Ascending aorta (tissue), 2 donors: ENCODE measurements at regions of chrX and their contacts with region 1.

Region 1: GRCh38 chrX:34053931-34054330 is 78.2 kb downstream of the FAM47A start:
- DNase-seq: no peak
- H3K4me3 ChIP-seq: no peak overlapping the region
- H3K27ac ChIP-seq: no peak overlapping the region
- H3K4me1 ChIP-seq: no peaks in the 10 kb centered on the region
- H3K27me3 ChIP-seq: no peaks in the 10 kb centered on the region
- CTCF ChIP-seq: no peak

Region 2: DNA sequence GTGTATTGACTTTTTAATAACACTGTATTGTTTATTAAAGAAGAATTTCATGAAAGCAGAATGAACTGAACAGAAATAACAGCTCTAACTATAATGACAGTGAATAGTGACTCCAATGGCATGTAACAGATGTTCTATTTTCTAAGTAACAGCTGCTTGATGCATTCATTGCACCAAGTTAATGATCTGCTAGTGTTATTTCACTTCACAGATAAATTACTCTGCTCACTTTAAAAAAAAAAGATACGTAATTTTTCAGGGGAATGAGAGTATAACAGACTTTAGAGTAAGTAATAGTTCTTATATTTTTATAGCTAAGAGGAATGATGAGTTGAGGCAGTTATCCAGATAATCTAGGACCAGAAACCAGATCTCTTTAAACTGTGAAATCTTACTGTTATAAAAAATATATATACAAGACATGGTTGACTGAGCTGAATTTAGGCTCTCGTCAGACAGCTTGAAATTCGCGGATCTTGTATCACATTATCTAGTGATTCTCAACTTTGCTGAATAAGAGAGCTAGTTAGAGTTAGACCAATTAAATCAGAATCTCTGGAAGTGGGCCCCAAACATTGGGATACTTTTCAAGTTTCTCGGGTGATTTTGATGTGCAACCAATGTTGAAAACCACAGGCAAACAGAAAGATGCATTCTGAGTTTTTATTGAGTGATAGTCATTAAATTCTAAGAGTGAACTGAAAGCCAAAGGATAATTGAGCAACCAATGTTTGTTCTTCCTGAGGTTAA is 1683.3 kb before region 1 on chrX:
- intact Hi-C with region 1: no loop called
- DNase-seq: no peak
- H3K4me3 ChIP-seq: no peak overlapping the region
- H3K27ac ChIP-seq: no peak overlapping the region
- H3K4me1 ChIP-seq: no peaks in the 10 kb centered on the region
- H3K27me3 ChIP-seq: no peaks in the 10 kb centered on the region
- CTCF ChIP-seq: no peak

Region 3: DNA sequence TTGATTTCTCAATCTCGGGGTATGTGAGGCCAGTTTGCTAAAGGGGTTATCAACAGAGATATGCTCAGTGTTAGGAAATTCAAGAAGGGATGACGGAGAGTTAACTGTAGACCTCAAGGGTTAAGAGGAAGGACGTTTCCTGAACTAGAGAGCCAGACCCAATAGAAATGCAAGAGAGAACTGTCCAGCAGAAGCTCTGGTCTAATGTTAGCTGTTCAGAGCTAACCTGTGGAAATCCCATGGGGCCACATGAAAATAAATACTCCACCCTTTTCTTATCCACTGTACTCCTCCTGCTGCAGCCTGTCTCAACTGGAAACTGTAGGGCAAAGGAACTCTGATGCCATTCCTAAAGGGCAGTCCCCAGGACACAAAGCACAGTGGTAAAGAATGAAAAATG is 1116.9 kb before region 1 on chrX:
- intact Hi-C with region 1: no loop called
- DNase-seq: no peak
- H3K4me3 ChIP-seq: no peak overlapping the region
- H3K27ac ChIP-seq: no peak overlapping the region
- H3K4me1 ChIP-seq: no peaks in the 10 kb centered on the region
- H3K27me3 ChIP-seq: no peaks in the 10 kb centered on the region
- CTCF ChIP-seq: no peak

Region 4: GRCh38 chrX:34028488-34028887 is 25.4 kb before region 1 on chrX:
- intact Hi-C with region 1: loop called (anchors 2 kb)
- DNase-seq: no peak
- H3K4me3 ChIP-seq: no peak overlapping the region
- H3K27ac ChIP-seq: no peak overlapping the region
- H3K4me1 ChIP-seq: no peaks in the 10 kb centered on the region
- H3K27me3 ChIP-seq: no peaks in the 10 kb centered on the region
- CTCF ChIP-seq: no peak